Thyroid gland (tissue), 4 donors: ENCODE measurements at regions of chr19 and their contacts with region 1.

Region 1: DNA sequence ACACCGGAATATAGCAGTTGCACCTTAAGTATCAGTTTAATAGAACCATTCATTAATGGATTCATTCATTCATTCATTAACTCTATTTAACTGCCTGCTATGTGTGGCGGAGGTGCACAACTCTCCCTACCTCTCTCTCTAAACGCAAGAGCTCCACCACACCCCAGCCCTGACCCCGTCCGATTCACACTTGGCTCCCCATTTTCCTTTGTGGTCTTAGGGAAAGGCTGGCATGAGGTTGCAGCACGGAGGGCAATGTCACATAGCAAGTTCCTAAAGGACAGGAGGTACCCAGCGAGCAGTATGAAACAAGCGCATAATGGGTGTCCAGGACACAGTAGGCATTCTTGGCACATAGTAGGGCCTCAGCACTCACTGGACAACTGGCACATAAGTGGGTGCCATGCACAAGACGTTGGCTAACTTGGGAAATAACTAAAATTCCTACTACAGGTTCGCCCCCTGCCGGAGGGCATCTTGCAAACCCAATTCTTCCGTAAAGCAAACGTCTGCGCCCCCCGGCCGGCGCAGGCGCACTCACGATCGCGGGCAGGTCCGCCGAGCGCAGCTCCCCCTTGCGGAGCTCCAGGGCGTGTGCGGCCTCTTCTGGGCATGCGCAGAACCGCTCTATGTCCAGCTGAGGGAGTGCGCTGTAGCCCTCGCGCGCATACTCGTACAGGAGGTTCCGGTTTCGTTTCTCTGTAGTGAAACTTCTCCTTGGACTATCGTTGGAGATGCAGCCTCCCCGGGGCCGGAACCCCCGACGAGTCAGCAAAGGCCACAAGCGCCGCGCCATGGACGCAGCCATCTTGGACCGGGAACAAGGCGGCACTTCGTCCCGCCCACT is at the start of gene SARS2:
- DNase-seq: peak; percentile 94
- H3K4me3 ChIP-seq: peak within 1 kb of the TSS; percentile 9 to 68 (median 42)
- H3K27ac ChIP-seq: peak within 1 kb of the TSS; percentile 59 to 86 (median 76)
- H3K4me1 ChIP-seq: peaks cover 0 to 17% of the 10 kb centered on the region in 2 donors
- H3K27me3 ChIP-seq: no peaks in the 10 kb centered on the region
- CTCF ChIP-seq: peak; percentile 85 to 99 (median 98)
- POLR2A ChIP-seq: peak in 1 of 2 donors; percentile 51
- total RNA-seq, gene SARS2: 26.6 to 52.0 (median 37.8) TPM

Region 2: GRCh38 chr19:38402967-38403861 is 526.9 kb before region 1 on chr19 and contains the start of gene FAM98C:
- intact Hi-C with region 1: loop called (anchors 10 kb)
- DNase-seq: peak; percentile 96
- H3K4me3 ChIP-seq: peak within 1 kb of the TSS; percentile 68 to 99 (median 86)
- H3K27ac ChIP-seq: peak within 1 kb of the TSS; percentile 56 to 86 (median 72)
- H3K4me1 ChIP-seq: peaks cover 5 to 7% of the 10 kb centered on the region in 2 donors
- H3K27me3 ChIP-seq: no peaks in the 10 kb centered on the region
- CTCF ChIP-seq: peak; percentile 73 to 99 (median 98)
- POLR2A ChIP-seq: peak in 1 of 2 donors; percentile 67
- total RNA-seq, gene FAM98C: 22.1 to 36.5 (median 23.9) TPM

Region 3: DNA sequence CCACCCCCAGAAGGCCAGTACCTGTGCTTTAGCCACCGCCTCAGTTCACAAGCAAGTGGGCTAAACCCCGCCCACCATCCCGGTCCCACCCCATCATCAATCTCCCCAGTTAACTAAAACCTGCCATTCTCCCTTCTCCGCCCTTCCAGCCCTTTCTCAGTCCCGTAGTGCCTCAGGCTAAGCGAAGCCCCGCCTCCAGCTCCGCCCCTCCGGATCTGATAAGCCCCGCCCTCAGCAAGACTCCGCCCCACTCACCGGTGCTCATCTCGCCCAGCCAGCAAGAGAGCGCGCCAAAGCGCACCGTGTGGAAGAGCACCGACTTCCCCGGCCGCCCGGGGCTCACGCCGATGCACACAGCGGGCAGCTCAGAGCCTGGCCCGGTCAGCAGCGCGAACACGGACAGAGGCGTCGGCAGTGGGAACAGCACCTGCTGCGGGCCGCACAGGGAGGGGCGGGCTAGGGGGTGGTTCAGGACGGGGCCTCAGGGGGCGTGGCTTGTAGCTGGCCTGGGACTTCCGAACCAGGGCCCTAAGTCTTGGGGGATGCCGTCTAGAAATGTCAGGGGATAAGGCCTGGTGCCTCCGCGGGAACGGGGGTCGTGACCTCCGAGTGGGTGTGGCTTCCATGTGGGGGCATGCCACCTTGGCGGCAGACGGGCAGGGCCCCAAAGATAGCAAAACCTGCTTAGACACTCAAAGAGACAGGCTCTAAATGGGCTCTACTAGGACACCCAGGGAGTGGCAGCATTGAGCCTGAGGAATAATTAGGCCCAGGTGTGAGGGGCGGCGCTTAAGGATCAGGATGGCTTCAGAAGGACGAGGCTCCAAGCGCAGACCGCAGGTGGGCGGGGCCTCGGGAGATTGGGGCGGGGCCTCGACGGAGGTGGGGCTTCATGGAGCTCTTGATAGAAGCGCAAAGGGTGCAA is 333.8 kb before region 1 on chr19:
- intact Hi-C with region 1: no loop called
- DNase-seq: peak; percentile 24 to 35
- H3K4me3 ChIP-seq: peak overlapping the region in 1 of 3 donors; percentile 14
- H3K27ac ChIP-seq: no peak overlapping the region
- H3K4me1 ChIP-seq: peaks cover 2 to 6% of the 10 kb centered on the region in 2 donors
- H3K27me3 ChIP-seq: no peaks in the 10 kb centered on the region
- CTCF ChIP-seq: no peak
- POLR2A ChIP-seq: no peak